GM12878 (cell line): ENCODE measurements at regions of chr16 and their contacts with region 1.

Region 1: GRCh38 chr16:25051406-25052150 is 36.4 kb upstream of the ARHGAP17 start:
- DNase-seq: no peak
- ATAC-seq: peak; percentile 13
- H3K4me3 ChIP-seq: peak overlapping the region; percentile 59; the same call in 1 of the 2 replicates
- H3K27ac ChIP-seq: peak overlapping the region; percentile 2
- H3K4me1 ChIP-seq: peaks cover 33% of the 10 kb centered on the region
- H3K27me3 ChIP-seq: no peaks in the 10 kb centered on the region
- CTCF ChIP-seq: no peak
- EP300 ChIP-seq: no peak; a peak in 1 of 4 replicates
- POLR2A ChIP-seq: no peak
- RAD21 ChIP-seq: 0 out of 2 replicates have a peak, but pooled peaks have one; percentile 1

Region 2: GRCh38 chr16:25031441-25032307 is 19.9 kb before region 1 on chr16:
- CTCF ChIA-PET with region 1: interaction called, 3 read pairs
- POLR2A ChIA-PET with region 1: interaction called, 14 read pairs
- RAD21 ChIA-PET with region 1: interaction called, 76 read pairs
- SMC1A ChIA-PET with region 1: interaction called, 39 read pairs
- in situ Hi-C with region 1: no loop called
- intact Hi-C with region 1: no loop called
- DNase-seq: peak; percentile 96
- ATAC-seq: peak; percentile 98
- H3K4me3 ChIP-seq: peak overlapping the region; percentile 98
- H3K27ac ChIP-seq: peak overlapping the region; percentile 91
- H3K4me1 ChIP-seq: peaks cover 16% of the 10 kb centered on the region
- H3K27me3 ChIP-seq: no peaks in the 10 kb centered on the region
- CTCF ChIP-seq: no peak
- EP300 ChIP-seq: no peak
- POLR2A ChIP-seq: peak; percentile 85
- RAD21 ChIP-seq: no peak

Region 3: GRCh38 chr16:25038239-25038954 is 13.2 kb before region 1 on chr16:
- CTCF ChIA-PET with region 1: interaction called, 5 read pairs
- POLR2A ChIA-PET with region 1: interaction called, 17 read pairs
- RAD21 ChIA-PET with region 1: interaction called, 76 read pairs
- SMC1A ChIA-PET with region 1: interaction called, 39 read pairs
- in situ Hi-C with region 1: no loop called
- intact Hi-C with region 1: no loop called
- DNase-seq: no peak
- ATAC-seq: peak; percentile 78
- H3K4me3 ChIP-seq: no peak overlapping the region
- H3K27ac ChIP-seq: peak overlapping the region; percentile 64
- H3K4me1 ChIP-seq: peaks cover 50% of the 10 kb centered on the region
- H3K27me3 ChIP-seq: no peaks in the 10 kb centered on the region
- CTCF ChIP-seq: no peak
- EP300 ChIP-seq: peak; percentile 74 to 85; a peak in 3 of 4 replicates
- POLR2A ChIP-seq: no peak
- RAD21 ChIP-seq: no peak

Region 4: DNA sequence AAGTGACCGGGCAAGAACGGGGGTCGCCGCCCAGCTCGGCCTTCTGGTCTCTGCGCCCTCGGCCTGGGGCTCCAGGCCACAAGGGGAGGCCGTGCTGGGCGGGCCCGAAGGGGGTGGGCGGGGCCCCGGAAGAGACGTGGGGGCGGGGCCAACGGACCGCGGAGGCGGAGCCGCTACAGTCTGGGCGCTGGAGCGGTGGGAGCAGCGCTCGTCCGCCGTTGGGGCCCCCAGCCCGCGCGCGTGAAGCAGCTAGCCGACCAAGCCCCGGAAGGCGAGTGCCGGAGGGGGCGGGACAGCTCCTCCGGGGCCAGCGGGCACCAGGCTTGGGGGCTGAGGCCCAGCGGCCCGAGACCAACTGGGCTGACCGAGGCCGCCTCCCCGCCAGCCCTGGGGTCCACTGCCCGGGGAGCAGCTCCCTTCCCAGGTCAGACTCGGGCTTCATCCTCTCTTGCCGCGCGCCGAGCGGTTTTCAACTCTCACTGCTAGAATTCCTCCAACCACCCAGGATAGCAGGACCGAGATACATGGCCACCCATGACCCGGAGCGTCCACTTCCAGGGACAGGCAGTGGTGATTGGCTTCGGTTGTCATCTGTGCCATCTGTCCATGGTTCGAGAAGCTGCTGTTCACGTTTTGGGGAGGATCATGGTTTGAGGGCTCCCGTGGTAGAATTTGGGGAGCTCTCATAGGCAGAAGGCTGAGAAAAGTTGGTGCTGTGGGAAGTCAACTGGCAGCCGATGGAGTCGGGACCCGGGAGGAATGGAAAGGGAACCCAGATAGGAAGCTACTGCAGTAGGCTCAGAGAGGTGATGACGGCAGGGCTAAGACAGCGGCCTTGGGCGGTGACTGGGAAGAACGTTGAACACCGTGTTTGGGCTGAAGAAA is 15.4 kb after region 1 on chr16:
- CTCF ChIA-PET with region 1: interaction called, 8 read pairs
- POLR2A ChIA-PET with region 1: interaction called, 5 read pairs
- RAD21 ChIA-PET with region 1: interaction called, 5 read pairs
- SMC1A ChIA-PET with region 1: interaction called, 32 read pairs
- in situ Hi-C with region 1: no loop called
- intact Hi-C with region 1: no loop called
- DNase-seq: no peak
- ATAC-seq: peak; percentile 98
- H3K4me3 ChIP-seq: peak overlapping the region; percentile 69
- H3K27ac ChIP-seq: peak overlapping the region; percentile 58
- H3K4me1 ChIP-seq: peaks cover 22% of the 10 kb centered on the region
- H3K27me3 ChIP-seq: peaks cover 0 to 2% of the 10 kb centered on the region in 2 experiments; a peak in 1 of 4 replicates
- CTCF ChIP-seq: no peak
- EP300 ChIP-seq: no peak
- POLR2A ChIP-seq: peak; percentile 71
- RAD21 ChIP-seq: no peak

Region 5: DNA sequence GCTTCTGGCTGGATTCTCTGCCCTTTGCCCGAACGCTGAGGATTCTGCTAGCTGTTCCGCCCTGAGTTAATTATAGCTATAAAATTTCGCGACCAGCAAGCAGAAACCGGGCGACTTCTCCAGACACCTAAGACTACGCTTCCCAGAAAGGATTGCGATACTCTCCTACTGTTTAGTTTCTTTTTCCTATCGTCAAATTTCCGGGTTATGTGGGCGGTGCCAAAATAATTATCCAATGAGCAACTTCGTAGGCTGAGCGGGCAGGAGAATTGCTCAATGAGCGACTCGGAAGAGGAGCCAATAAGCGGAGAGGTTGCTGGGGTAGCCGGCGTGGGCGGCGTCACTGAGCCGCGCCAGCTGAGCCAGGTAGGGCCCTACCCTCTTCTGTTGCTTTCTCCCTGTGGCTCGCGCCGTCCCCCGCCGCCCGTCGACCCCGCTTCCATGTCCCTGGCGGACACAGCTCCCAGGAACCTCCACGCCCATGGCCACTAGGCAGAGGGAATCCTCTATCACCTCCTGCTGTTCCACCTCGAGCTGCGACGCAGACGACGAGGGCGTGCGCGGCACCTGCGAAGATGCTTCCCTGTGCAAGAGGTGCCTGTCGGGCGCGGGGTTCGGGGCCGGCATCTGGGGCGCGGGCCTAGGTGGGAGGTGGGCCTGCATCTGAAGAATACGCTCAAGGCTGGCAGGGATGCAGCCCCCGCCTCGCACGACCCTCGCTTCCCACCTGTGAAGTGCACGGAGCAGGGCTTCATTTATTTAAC is 60.0 kb after region 1 on chr16 and contains the start of gene LCMT1:
- CTCF ChIA-PET with region 1: interaction called, 53 read pairs
- POLR2A ChIA-PET with region 1: interaction called, 6 read pairs
- RAD21 ChIA-PET with region 1: interaction called, 35 read pairs
- SMC1A ChIA-PET with region 1: interaction called, 84 read pairs
- in situ Hi-C with region 1: no loop called
- intact Hi-C with region 1: loop called (anchors 1 kb)
- DNase-seq: peak; percentile 97
- ATAC-seq: peak; percentile 87
- H3K4me3 ChIP-seq: peak within 1 kb of the TSS; percentile 85
- H3K27ac ChIP-seq: peak within 1 kb of the TSS; percentile 72
- H3K4me1 ChIP-seq: peaks cover 9% of the 10 kb centered on the region; the same call in 1 of the 2 replicates
- H3K27me3 ChIP-seq: no peaks in the 10 kb centered on the region
- CTCF ChIP-seq: no peak
- EP300 ChIP-seq: no peak
- POLR2A ChIP-seq: peak; percentile 82
- RAD21 ChIP-seq: no peak
- polyA plus RNA-seq, gene LCMT1: 34.1 to 37.8 TPM

Region 6: DNA sequence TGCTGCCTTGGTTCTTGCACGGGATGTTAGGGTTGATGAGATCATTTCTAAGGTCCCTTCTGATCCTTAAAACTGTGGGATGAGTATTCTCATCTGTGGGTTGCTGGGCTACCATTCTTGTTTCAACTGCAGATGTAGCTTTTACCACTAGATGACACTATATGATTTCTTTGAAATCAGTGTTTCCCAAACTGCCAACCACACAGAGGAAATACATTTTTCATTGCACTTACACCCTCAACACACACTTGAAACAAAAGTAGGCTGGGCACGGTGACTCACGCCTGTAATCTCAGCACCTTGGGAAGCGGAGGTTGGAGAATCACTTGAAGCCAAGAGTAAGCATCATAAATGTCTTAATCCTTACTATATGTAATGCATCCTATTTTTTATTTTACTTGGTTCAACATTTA is 75.2 kb after region 1 on chr16:
- CTCF ChIA-PET with region 1: interaction called, 4 read pairs
- POLR2A ChIA-PET with region 1: interaction called, 3 read pairs
- RAD21 ChIA-PET with region 1: no interaction called
- SMC1A ChIA-PET with region 1: no interaction called
- in situ Hi-C with region 1: no loop called
- intact Hi-C with region 1: loop called (anchors 1 kb)
- DNase-seq: no peak
- ATAC-seq: peak; percentile 68
- H3K4me3 ChIP-seq: no peak overlapping the region
- H3K27ac ChIP-seq: no peak overlapping the region
- H3K4me1 ChIP-seq: no peaks in the 10 kb centered on the region
- H3K27me3 ChIP-seq: no peaks in the 10 kb centered on the region
- CTCF ChIP-seq: peak; percentile 52 to 65 (median 64); a peak in 5 of 6 replicates
- EP300 ChIP-seq: no peak
- POLR2A ChIP-seq: no peak
- RAD21 ChIP-seq: peak; percentile 57